Panc1 (cell line): ENCODE measurements at regions of chr5 and their contacts with region 1.

Region 1: GRCh38 chr5:27854243-27854852 is 816.0 kb upstream of the CDH9 start:
- DNase-seq: no peak
- ATAC-seq: no peak
- H3K4me3 ChIP-seq: no peak overlapping the region
- H3K27ac ChIP-seq: no peak overlapping the region
- H3K4me1 ChIP-seq: no peaks in the 10 kb centered on the region
- H3K27me3 ChIP-seq: no peaks in the 10 kb centered on the region
- CTCF ChIP-seq: no peak

Region 2: GRCh38 chr5:27727254-27727653 is 127.1 kb before region 1 on chr5:
- CTCF ChIA-PET with region 1: no interaction called
- POLR2A ChIA-PET with region 1: no interaction called
- in situ Hi-C with region 1: no loop called
- intact Hi-C with region 1: no loop called
- DNase-seq: no peak
- ATAC-seq: no peak
- H3K4me3 ChIP-seq: no peak overlapping the region
- H3K27ac ChIP-seq: no peak overlapping the region
- H3K4me1 ChIP-seq: no peaks in the 10 kb centered on the region
- H3K27me3 ChIP-seq: no peaks in the 10 kb centered on the region
- CTCF ChIP-seq: no peak

Region 3: DNA sequence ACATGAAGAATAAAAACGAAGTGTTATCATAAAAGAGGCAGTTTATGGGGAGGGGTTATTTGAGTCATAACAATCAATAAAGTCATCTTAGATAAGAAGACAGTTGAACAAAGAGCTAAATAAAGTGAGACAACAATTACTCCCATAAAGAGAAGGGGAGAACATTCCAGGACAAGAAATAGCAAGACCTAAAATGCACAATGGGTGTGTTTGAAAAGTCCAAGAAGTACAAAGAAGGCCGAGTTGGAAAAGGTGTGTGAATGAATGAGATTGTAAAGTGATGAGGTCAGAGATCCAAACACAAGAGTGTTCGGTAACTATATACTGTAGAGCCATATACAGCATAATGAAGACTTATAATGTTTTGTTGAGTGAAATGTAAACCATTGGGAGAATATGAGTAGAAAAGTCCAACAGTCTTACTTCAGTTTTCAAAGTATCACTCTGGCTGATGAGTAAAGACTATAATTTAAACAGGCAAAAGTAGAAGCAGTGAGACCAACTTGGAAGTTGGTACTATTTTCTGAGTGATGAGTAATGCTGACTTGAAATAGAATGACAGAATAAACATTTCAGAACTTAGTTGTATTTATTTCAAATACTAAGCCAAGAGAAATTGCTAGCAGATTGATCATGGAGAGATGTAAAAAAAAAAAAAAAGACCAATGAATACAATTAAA is 52.7 kb after region 1 on chr5:
- CTCF ChIA-PET with region 1: no interaction called
- POLR2A ChIA-PET with region 1: interaction called, 25 read pairs
- in situ Hi-C with region 1: no loop called
- intact Hi-C with region 1: no loop called
- DNase-seq: peak; percentile 35
- ATAC-seq: no peak
- H3K4me3 ChIP-seq: no peak overlapping the region
- H3K27ac ChIP-seq: no peak overlapping the region
- H3K4me1 ChIP-seq: no peaks in the 10 kb centered on the region
- H3K27me3 ChIP-seq: no peaks in the 10 kb centered on the region
- CTCF ChIP-seq: no peak